Uterus (tissue), 4 donors: ENCODE measurements at regions of chr9 and their contacts with region 1.

Region 1: GRCh38 chr9:22065431-22066200 is 56.5 kb upstream of the CDKN2B start:
- DNase-seq: no peak
- H3K4me3 ChIP-seq: no peak overlapping the region
- H3K27ac ChIP-seq: no peak overlapping the region
- H3K4me1 ChIP-seq: no peaks in the 10 kb centered on the region
- H3K27me3 ChIP-seq: no peaks in the 10 kb centered on the region
- CTCF ChIP-seq: no peak
- POLR2A ChIP-seq: no peak

Region 2: DNA sequence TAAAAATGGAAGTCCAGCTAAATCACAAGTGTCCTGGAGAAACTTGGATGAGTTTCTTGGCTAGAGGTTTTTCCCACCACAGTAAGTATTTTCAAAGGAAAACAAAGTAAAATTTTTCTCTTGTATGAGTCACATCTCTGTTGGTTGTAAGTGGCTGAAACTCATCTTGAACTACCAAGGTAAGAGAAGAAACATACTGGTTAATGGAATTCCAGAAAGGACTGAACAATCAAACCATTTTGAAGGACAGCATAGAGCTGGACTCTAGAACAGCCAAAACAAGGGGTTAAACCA is 46.3 kb after region 1 on chr9:
- intact Hi-C with region 1: loop called (anchors 2 kb)
- DNase-seq: no peak
- H3K4me3 ChIP-seq: no peak overlapping the region
- H3K27ac ChIP-seq: peak overlapping the region; percentile 47 to 58
- H3K4me1 ChIP-seq: no peaks in the 10 kb centered on the region
- H3K27me3 ChIP-seq: no peaks in the 10 kb centered on the region
- CTCF ChIP-seq: no peak
- POLR2A ChIP-seq: no peak

Region 3: GRCh38 chr9:22405869-22406659 is 340.4 kb after region 1 on chr9:
- intact Hi-C with region 1: no loop called
- DNase-seq: no peak
- H3K4me3 ChIP-seq: no peak overlapping the region
- H3K27ac ChIP-seq: no peak overlapping the region
- H3K4me1 ChIP-seq: no peaks in the 10 kb centered on the region
- H3K27me3 ChIP-seq: no peaks in the 10 kb centered on the region
- CTCF ChIP-seq: no peak
- POLR2A ChIP-seq: no peak